ENCODE measurements at regions of chr18 and their contacts with region 1.

Region 1: GRCh38 chr18:11937874-11938478 is 29.9 kb upstream of the MPPE1 start:
- DNase-seq: peak; percentile 89
- ATAC-seq: peak; percentile 62
- H3K4me3 Mint-ChIP-seq: no peak overlapping the region
- H3K27ac Mint-ChIP-seq: no peak overlapping the region
- H3K4me1 Mint-ChIP-seq: no peaks in the 10 kb centered on the region
- H3K27me3 Mint-ChIP-seq: no peaks in the 10 kb centered on the region
- CTCF ChIP-seq: peak; percentile 71

Region 2: DNA sequence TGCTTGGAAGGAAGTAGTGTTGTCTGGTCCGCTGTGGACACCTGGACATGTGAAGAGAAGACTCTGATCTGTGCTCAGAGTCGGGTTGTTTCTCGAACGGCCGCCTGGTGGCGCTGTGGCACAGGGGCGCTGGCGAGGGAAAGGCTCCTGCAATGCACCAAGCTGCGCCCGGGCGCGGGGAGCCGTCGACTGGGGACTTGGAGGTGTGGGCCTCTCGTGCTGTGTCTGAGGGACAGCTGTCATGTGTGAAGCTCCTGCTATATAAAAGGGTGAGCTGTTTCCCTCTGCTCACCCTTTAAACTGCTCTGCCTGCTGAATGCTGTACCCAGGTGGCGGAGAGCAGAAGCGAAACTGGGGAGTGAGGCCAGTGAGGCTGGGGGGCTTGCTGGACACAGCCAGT is 204.9 kb before region 1 on chr18:
- CTCF ChIA-PET with region 1: interaction called, 14 read pairs
- POLR2A ChIA-PET with region 1: no interaction called
- intact Hi-C with region 1: no loop called
- DNase-seq: peak; percentile 80
- ATAC-seq: peak; percentile 91
- H3K4me3 Mint-ChIP-seq: no peak overlapping the region
- H3K27ac Mint-ChIP-seq: no peak overlapping the region
- H3K4me1 Mint-ChIP-seq: no peaks in the 10 kb centered on the region
- H3K27me3 Mint-ChIP-seq: peaks cover 32% of the 10 kb centered on the region
- CTCF ChIP-seq: peak; percentile 90

Region 3: DNA sequence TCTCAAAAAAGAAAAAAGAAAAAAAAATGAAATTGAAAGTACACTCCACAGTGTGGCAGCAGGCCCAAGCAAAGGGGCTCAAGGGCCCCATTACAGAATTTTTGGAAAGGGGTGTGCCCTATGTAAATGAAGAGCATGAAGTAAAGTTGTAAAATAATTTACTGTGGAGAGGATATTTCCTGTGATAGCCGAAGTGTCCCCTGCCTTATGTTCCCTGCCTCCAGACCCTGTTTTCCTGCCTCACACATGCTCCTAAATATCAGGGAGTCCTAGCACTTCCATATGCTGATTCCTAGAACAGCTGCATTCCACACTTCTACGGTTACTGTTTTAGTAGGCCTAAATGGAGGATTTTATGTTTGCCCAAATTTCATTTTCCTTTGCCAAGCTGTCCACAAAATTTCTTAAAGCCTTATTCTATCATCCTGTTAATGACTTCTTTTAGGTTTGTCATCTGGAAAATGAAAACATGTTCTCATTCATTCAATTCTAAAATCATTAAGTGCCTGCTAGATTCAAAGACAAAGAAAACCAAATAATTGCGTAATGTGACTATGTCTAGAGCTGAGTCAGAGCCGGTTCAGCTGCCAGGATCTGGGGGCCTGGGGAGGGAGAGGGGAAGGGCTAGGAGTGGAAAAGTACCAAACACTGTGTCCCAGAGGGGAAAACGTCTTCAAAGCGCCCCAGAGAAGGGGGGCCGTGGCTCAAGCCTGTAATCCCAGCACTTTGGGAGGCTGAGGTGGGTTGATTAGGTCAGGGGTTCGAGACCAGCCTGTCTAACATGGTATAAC is 17.5 kb after region 1 on chr18:
- CTCF ChIA-PET with region 1: interaction called, 56 read pairs
- POLR2A ChIA-PET with region 1: no interaction called
- intact Hi-C with region 1: no loop called
- DNase-seq: no peak
- ATAC-seq: no peak
- H3K4me3 Mint-ChIP-seq: no peak overlapping the region
- H3K27ac Mint-ChIP-seq: no peak overlapping the region
- H3K4me1 Mint-ChIP-seq: peaks cover 3% of the 10 kb centered on the region
- H3K27me3 Mint-ChIP-seq: no peaks in the 10 kb centered on the region
- CTCF ChIP-seq: no peak

Region 4: DNA sequence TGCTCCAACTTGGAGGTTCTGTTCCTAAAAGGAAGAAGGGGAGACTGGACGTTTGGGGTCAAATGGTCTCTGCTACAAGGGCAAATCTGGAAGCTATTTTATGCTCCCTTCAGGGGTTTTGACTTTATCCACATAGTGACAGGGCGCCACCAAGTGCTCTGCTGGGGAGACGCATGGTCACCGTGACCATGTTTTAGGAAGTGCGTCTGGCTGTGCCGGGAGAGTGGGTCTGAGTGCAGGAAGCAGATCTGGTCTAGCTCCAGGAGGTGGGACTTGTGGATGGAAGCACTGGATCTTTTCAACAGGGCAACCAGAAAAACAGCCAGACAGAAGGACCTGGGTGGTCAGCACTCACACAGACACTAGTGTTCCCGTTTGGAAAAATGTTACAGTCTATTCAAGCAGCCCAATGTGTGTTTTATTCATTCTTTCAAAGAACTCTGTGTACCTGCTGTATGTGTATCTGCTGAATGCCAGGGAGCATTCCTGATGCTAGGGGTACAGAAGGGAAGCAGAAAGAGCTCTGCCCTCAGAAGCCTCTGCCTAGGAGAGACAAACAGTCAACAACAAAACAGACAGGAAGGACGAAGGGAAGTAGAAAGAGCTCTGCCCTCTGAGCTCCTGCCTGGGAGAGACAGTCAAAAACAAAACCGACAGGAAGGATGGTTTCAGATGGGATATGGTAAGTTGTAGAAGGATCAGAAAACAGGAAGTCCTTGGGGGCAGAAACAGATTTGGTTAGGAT is 57.6 kb after region 1 on chr18:
- CTCF ChIA-PET with region 1: interaction called, 247 read pairs
- POLR2A ChIA-PET with region 1: no interaction called
- intact Hi-C with region 1: loop called (anchors 2 kb)
- DNase-seq: peak; percentile 70
- ATAC-seq: peak; percentile 85
- H3K4me3 Mint-ChIP-seq: no peak overlapping the region
- H3K27ac Mint-ChIP-seq: no peak overlapping the region
- H3K4me1 Mint-ChIP-seq: peaks cover 6% of the 10 kb centered on the region
- H3K27me3 Mint-ChIP-seq: no peaks in the 10 kb centered on the region
- CTCF ChIP-seq: peak; percentile 75

Region 5: DNA sequence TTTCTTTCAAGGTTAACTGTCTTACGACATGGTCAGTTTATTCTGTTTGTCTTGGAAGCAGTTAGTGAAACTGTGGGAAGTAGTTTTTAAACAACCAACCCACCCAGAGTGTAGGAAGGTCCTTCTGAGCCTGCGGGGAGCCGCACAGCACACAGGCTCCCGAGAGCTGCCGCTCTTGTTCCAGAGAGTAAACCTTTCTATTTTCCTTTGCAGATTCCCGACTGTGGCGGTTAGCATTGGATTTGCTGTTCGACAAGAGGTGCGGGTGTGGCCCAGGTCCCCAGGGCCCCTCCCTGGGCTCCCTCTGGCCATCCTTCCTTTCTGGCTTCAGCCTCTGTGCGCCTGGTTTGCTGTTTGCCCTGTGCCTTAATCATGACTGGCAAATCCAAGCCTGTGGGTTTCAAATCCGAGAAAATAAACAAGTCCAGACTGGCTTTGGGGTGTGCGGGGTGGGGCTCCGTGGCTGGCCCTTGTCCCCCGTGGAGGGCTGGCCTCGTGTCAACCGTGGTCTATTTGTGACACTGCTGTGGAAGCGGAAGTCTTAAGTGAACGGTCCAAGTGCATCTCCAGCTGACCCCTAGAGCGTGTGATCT is 74.1 kb after region 1 on chr18:
- CTCF ChIA-PET with region 1: interaction called, 11 read pairs
- POLR2A ChIA-PET with region 1: no interaction called
- intact Hi-C with region 1: no loop called
- DNase-seq: no peak
- ATAC-seq: no peak
- H3K4me3 Mint-ChIP-seq: no peak overlapping the region
- H3K27ac Mint-ChIP-seq: no peak overlapping the region
- H3K4me1 Mint-ChIP-seq: no peaks in the 10 kb centered on the region
- H3K27me3 Mint-ChIP-seq: no peaks in the 10 kb centered on the region
- CTCF ChIP-seq: no peak

Region 6: DNA sequence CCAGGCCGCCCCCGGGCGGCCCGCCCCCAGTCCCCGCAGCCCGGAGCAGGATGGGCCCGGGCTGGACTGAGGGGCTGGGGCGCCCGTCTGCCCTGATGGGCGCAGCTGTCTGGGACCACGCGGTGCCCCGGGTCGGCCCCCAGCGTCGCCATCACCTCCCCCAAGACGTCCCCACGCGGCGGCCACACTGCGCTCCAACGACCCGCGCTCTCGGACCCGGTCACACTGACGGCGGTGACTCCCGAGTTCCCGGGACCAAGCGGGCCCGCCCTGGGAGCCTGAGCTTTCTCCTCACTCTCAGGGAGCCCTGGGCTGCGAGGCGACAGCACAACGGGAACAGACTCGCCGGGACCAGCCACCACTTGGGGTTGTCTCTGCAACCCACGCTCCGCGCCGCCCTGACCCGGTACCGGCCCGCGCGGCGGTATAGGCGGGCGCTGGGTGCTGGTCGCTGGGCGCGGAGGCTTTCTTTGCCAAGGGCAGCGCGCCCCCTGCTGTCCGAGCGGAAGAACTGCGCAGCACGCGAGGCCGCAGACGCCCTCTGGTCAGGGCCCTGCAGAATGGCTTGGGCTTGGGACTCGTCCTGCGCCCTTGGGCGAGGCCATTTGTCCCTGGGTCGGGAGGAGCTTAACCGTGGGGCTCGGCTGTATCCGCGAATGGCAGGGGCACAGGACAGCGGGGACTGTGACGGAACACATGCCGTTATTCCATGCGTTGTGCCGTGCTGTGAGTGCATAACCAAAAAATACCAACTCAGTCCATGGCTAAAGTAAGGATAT is 100.9 kb after region 1 on chr18:
- CTCF ChIA-PET with region 1: interaction called, 90 read pairs
- POLR2A ChIA-PET with region 1: no interaction called
- intact Hi-C with region 1: loop called (anchors 2 kb)
- DNase-seq: peak; percentile 74
- ATAC-seq: peak; percentile 93
- H3K4me3 Mint-ChIP-seq: peak overlapping the region; percentile 58
- H3K27ac Mint-ChIP-seq: no peak overlapping the region
- H3K4me1 Mint-ChIP-seq: peaks cover 6% of the 10 kb centered on the region
- H3K27me3 Mint-ChIP-seq: peaks cover 11% of the 10 kb centered on the region
- CTCF ChIP-seq: peak; percentile 99

Region 7: GRCh38 chr18:12373116-12373770 is 435.3 kb after region 1 on chr18:
- CTCF ChIA-PET with region 1: no interaction called
- POLR2A ChIA-PET with region 1: no interaction called
- intact Hi-C with region 1: no loop called
- DNase-seq: no peak
- ATAC-seq: no peak
- H3K4me3 Mint-ChIP-seq: no peak overlapping the region
- H3K27ac Mint-ChIP-seq: no peak overlapping the region
- H3K4me1 Mint-ChIP-seq: peaks cover 49% of the 10 kb centered on the region
- H3K27me3 Mint-ChIP-seq: no peaks in the 10 kb centered on the region
- CTCF ChIP-seq: no peak